ENCODE measurements at regions of chr11 and their contacts with region 1.

Region 1: DNA sequence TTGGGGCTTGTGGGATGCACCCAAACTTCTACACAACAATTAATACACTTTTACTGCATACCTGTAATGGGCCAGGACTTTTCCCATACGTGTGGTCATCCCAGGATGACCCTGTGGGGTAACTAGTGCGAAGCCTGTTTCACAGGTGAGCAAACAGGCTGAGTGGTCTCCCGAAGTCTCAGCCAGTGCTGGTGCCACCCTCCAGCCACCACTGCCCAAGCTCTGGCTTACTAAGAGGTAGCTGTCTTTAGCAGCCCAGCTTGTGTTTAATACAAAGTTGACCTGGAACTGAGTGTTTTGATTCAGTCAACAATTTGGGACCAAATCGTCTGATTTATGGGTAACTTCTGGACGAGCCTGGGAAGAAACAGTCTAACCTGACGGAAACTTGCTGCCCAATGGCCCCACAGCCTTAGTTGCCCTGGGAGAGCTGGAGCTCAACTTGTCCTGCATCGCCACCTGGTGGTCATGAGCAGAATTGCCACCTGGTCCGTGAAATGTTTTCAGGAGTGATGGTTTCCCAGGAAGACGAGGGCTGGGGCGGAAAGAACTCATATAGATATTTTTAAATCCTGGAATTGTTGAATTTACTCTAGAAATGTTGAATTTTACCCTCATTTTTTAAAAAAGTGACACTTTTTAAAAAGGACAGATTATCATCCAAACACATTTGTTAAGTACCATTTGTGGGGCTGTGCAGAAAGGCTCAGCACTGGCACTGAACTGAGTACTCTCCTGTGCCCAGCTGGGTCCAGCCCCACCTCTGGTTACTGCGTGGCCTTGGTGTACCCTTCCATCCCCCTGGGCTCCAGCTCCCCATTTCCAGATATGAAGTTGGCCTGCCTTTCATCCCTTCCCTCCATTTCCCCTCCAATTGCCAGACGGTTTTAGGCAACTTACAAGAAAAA is 95.5 kb upstream of the PARVA start:
- DNase-seq: peak; percentile 46 to 89
- H3K4me3 ChIP-seq: no peak overlapping the region
- H3K4me1 ChIP-seq: peaks cover 3% of the 10 kb centered on the region; the same call in 1 of the 2 replicates
- H3K27me3 ChIP-seq: peaks cover 4% of the 10 kb centered on the region; the same call in 1 of the 2 replicates

Region 2: DNA sequence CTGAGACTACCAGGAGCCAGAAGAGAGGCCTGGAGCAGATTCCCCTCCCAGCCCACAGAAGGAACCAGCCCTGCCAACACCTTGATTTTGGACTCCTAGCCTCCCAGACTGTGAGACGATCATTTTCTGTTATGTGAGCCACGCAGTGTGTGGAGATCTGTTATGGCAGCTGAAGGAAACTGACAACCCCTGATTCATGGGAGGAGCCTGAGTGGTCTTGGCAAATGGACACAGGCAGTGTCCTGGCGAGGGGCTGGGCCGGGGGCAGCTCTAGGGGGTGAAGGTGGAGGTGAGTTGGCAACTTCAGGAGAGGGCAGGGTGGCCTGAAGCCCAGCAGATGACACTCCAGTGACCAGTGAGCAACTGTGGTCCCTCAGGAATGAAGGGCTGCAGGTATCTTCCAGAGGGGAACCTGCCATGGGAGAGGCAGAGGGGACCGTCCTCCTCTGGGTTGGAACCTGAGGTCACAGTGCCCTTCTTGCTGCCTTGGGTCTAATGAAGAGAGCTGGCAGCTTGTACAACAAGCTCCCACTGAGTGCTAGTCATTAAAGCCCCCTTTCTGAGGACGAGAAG is 1011.5 kb before region 1 on chr11:
- in situ Hi-C with region 1: no loop called
- DNase-seq: no peak
- H3K4me3 ChIP-seq: no peak overlapping the region
- H3K4me1 ChIP-seq: no peaks in the 10 kb centered on the region
- H3K27me3 ChIP-seq: no peaks in the 10 kb centered on the region

Region 3: GRCh38 chr11:11798586-11799438 is 483.0 kb before region 1 on chr11:
- in situ Hi-C with region 1: loop called (anchors 10 kb)
- DNase-seq: peak; percentile 38 to 87
- H3K4me3 ChIP-seq: no peak overlapping the region
- H3K4me1 ChIP-seq: no peaks in the 10 kb centered on the region
- H3K27me3 ChIP-seq: peaks cover 29% of the 10 kb centered on the region

Region 4: GRCh38 chr11:11987503-11988022 is 294.3 kb before region 1 on chr11:
- in situ Hi-C with region 1: no loop called
- DNase-seq: no peak
- H3K4me3 ChIP-seq: no peak overlapping the region
- H3K4me1 ChIP-seq: no peaks in the 10 kb centered on the region
- H3K27me3 ChIP-seq: no peaks in the 10 kb centered on the region

Region 5: DNA sequence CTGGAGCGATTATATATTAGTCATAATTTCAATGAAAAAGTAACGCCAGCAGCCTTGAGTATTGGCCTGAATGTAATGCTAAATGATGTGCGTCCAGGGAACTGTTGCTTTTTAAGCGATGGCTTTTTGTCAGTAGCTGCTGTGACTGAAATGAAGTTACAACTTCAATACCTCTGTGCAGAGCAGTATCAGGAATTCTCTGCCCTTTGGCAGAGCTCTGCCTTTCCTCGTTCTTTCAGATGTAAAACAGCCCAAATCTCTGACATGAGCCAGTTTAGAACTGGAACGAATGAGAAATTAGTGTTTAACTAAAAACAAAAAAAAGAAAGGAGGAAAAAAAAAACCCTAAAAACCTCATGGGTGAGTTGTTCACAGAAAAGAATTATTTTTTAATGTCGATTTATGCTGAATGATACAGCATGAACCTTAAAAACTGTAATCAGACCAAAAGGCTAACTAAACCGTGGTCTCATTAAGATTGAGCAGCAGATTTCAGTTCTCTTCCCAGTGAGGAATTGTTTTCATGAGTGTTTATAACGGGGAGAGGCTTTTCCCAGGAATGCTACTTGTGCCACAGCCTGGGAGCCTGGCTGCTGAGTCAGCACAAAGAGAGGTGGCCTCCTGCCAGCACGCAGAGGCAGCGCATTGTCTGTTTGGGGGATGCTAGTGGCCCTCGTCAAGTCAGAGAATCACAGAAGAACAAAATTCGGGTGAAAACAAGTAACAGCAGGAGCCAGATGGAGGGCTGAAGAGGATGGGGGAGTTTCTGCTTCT is 581.1 kb after region 1 on chr11:
- in situ Hi-C with region 1: no loop called
- DNase-seq: peak; percentile 79 to 87
- H3K4me3 ChIP-seq: no peak overlapping the region
- H3K4me1 ChIP-seq: peaks cover 46% of the 10 kb centered on the region
- H3K27me3 ChIP-seq: no peaks in the 10 kb centered on the region